Psoas muscle (tissue), 8 donors: ENCODE measurements at regions of chr6 and their contacts with region 1.

Region 1: DNA sequence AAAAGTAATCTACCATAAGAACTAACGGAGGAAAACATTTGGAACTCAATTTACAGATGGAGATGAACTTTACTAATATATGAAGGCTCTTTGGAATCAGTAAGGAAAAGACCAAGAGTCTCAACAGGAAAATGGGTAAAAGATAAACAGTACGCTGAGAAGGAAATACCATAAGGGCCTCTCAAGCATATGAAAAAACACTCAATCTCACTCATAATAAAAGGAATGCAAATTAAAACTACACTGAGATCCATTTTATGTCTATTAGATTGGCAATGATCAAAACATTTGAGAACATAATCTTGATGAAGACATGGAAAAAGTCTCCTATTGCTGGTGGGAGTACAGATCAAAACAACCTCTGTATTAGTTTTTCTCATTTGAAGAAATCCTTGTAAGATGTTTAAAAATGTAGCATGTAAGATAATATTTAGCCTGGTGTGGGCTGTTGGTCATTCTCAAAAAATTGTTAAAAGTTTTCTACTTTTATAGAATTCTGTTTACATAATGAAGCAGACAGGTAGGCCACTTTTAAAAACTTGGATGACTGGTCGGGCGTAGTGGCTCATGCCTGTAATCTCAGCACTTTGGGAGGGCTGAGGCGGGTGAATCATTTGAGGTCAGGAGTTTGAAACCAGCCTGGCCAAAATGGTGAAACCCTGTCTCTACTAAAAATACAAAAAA is 14.5 kb downstream of the REV3L start:
- DNase-seq: no peak
- ATAC-seq: no peak
- H3K4me3 ChIP-seq: no peak overlapping the region
- H3K27ac ChIP-seq: no peak overlapping the region
- H3K4me1 ChIP-seq: peaks cover 47% of the 10 kb centered on the region
- H3K27me3 ChIP-seq: no peaks in the 10 kb centered on the region
- CTCF ChIP-seq: no peak

Region 2: DNA sequence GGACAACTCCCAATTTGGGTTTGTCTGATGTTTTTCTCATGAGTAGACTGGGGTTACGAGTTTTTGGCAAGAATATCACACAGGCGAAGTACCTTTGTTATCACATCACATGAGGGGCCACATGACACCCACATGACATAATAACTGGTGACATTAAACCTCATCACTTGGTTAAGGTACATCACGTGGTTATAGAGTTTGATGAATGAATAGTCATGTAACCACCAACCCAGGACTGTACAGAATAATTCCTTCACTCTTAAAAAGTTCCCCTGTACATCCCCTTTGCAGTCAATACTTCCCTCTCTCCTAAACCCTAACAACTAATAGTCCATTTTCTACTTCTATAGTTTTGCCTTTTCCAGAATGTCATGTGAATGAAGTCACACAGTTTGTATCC is 68.8 kb before region 1 on chr6:
- intact Hi-C with region 1: no loop called
- DNase-seq: no peak
- ATAC-seq: no peak
- H3K4me3 ChIP-seq: no peak overlapping the region
- H3K27ac ChIP-seq: no peak overlapping the region
- H3K4me1 ChIP-seq: no peaks in the 10 kb centered on the region
- H3K27me3 ChIP-seq: no peaks in the 10 kb centered on the region
- CTCF ChIP-seq: no peak

Region 3: GRCh38 chr6:111427341-111428116 is 40.9 kb before region 1 on chr6:
- intact Hi-C with region 1: loop called (anchors 5 kb)
- DNase-seq: no peak
- ATAC-seq: peak; percentile 58 to 68 (median 65)
- H3K4me3 ChIP-seq: no peak overlapping the region
- H3K27ac ChIP-seq: peak overlapping the region; percentile 10
- H3K4me1 ChIP-seq: peaks cover 54% of the 10 kb centered on the region
- H3K27me3 ChIP-seq: no peaks in the 10 kb centered on the region
- CTCF ChIP-seq: no peak

Region 4: DNA sequence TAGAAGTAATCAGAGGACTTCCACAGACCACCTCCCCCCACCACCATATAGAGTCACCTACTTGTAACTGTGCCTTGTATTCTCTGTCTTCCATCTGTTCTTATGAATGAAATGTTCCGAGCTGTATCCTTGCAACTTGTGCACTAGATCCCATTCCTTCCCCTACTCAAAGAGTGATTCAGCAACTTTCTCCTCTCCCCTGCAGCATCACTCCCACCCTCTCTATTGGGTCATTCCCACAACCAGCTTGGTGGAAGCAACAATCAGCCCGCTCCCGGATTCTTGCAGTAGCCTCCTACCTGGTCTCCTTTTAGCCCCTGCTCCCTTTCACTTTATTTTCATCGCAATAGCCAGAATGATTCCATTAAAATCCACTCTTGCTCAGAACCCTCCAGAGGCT is 49.5 kb after region 1 on chr6:
- intact Hi-C with region 1: no loop called
- DNase-seq: no peak
- ATAC-seq: no peak
- H3K4me3 ChIP-seq: no peak overlapping the region
- H3K27ac ChIP-seq: no peak overlapping the region
- H3K4me1 ChIP-seq: no peaks in the 10 kb centered on the region
- H3K27me3 ChIP-seq: no peaks in the 10 kb centered on the region
- CTCF ChIP-seq: no peak

Region 5: DNA sequence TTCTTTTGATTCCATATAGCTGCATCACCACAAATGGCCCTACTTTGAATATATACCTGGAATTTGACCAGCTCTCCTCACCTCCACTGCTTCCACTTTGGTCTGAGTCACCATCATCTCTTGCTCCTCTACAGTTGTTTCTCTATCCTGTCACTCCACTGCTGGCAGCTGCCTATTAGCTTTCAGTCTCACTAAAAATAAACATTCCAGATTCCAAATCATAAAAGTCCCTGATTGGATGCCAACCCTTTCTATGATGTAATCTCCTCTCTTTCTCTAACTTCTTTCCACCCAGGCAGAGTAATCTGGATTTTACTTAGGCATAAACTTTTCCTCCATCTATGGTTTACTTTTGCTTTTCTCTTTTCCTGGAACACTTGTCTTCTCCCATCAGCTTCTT is 927.8 kb after region 1 on chr6:
- intact Hi-C with region 1: no loop called
- DNase-seq: no peak
- ATAC-seq: no peak
- H3K4me3 ChIP-seq: no peak overlapping the region
- H3K27ac ChIP-seq: no peak overlapping the region
- H3K4me1 ChIP-seq: no peaks in the 10 kb centered on the region
- H3K27me3 ChIP-seq: no peaks in the 10 kb centered on the region
- CTCF ChIP-seq: no peak